GM12878 (cell line): ENCODE measurements at regions of chr18 and their contacts with region 1.

Region 1: DNA sequence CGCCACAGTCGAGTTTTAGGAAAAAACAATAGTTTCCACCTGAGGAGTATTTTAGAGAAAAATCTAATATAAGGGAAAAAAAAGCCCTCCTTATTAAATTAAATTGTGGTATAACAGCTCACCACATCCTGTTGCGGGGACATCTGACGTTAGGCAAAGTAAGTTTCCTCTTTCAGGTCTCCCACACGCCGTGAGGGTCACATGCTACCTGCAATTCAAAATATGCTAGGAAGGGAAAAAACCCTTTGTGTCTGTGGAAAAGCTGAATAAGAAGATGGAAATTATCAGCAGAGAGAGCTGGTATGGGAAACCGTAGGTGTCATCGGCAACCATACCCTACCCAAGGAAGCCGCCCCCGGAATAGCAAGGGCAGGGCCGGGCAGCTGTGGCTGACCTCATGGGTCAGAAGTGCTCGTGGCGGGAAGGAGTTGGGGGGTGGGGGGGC is 128.0 kb downstream of the NFATC1 start:
- DNase-seq: peak; percentile 49
- ATAC-seq: peak; percentile 82
- H3K4me3 ChIP-seq: no peak overlapping the region
- H3K27ac ChIP-seq: peak overlapping the region; percentile 69
- H3K4me1 ChIP-seq: peaks cover 26% of the 10 kb centered on the region
- H3K27me3 ChIP-seq: no peaks in the 10 kb centered on the region
- CTCF ChIP-seq: no peak
- EP300 ChIP-seq: peak; percentile 72 to 95
- POLR2A ChIP-seq: no peak
- RAD21 ChIP-seq: no peak

Region 2: DNA sequence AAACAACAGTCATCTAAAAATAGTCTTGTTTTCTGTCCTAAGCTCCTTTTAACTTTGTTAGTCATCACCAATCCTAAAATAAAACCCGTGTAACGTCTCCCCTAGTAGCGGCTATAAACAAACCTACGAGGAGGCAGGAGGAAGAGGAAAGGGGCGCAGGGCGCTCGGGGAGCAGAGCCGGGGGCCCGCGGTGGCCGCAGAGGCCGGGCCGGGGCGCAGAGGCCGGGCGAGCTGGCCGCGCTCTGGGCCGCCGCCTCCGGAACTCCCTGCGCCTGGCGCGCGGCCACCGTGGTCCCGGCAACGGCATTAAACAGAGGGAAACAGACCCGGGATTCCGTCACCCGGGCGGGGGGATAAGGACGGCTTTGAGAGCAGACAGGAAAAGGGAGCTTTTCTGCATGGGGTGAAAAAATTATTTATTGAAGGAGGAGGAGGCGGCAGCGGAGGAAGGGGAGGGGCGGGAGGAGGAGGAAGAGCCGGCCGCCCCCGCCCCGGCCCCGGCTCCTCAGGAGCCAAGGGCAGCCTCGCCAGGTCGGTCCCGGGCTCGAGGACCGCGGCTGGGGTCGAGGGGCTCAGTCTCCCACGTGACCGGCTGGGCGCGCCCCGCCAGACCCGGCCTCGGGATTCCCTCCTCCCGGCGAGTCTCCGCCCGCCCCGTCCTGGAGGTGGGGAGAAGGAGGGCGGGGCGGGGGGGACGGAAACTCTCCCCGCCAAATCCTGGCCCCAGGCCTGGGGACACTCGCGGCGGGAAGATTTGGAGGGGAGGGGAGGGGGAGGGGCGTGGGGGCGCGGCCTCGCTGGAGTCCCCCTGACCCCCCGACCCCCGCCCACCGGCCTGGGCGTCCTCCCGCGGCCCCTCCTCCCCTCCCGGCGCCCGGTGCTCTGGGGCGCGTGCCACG is 129.9 kb before region 1 on chr18:
- CTCF ChIA-PET with region 1: interaction called, 31 read pairs
- POLR2A ChIA-PET with region 1: interaction called, 16 read pairs
- RAD21 ChIA-PET with region 1: interaction called, 38 read pairs
- SMC1A ChIA-PET with region 1: interaction called, 22 read pairs
- in situ Hi-C with region 1: no loop called
- intact Hi-C with region 1: loop called (anchors 5 kb)
- DNase-seq: no peak
- ATAC-seq: peak; percentile 35
- H3K4me3 ChIP-seq: peak overlapping the region; percentile 68
- H3K27ac ChIP-seq: no peak overlapping the region
- H3K4me1 ChIP-seq: peaks cover 12% of the 10 kb centered on the region
- H3K27me3 ChIP-seq: peaks cover 2 to 21% of the 10 kb centered on the region in 2 experiments; a peak in 3 of 4 replicates
- CTCF ChIP-seq: no peak
- EP300 ChIP-seq: no peak
- POLR2A ChIP-seq: no peak
- RAD21 ChIP-seq: no peak

Region 3: GRCh38 chr18:79405781-79406575 is 117.8 kb before region 1 on chr18:
- CTCF ChIA-PET with region 1: interaction called, 6 read pairs
- POLR2A ChIA-PET with region 1: interaction called, 7 read pairs
- RAD21 ChIA-PET with region 1: interaction called, 36 read pairs
- SMC1A ChIA-PET with region 1: interaction called, 18 read pairs
- in situ Hi-C with region 1: loop called (anchors 10 kb)
- intact Hi-C with region 1: no loop called
- DNase-seq: peak; percentile 45
- ATAC-seq: peak; percentile 83
- H3K4me3 ChIP-seq: peak overlapping the region; percentile 52; the same call in 1 of the 2 replicates
- H3K27ac ChIP-seq: peak overlapping the region; percentile 56
- H3K4me1 ChIP-seq: peaks cover 31% of the 10 kb centered on the region
- H3K27me3 ChIP-seq: no peaks in the 10 kb centered on the region
- CTCF ChIP-seq: 0 out of 6 replicates have a peak, but pooled peaks of 1 of the 3 experiments have one; percentile 6
- EP300 ChIP-seq: peak in 1 of 2 experiments; percentile 27; a peak in 2 of 4 replicates
- POLR2A ChIP-seq: peak; percentile 74
- RAD21 ChIP-seq: no peak

Region 4: DNA sequence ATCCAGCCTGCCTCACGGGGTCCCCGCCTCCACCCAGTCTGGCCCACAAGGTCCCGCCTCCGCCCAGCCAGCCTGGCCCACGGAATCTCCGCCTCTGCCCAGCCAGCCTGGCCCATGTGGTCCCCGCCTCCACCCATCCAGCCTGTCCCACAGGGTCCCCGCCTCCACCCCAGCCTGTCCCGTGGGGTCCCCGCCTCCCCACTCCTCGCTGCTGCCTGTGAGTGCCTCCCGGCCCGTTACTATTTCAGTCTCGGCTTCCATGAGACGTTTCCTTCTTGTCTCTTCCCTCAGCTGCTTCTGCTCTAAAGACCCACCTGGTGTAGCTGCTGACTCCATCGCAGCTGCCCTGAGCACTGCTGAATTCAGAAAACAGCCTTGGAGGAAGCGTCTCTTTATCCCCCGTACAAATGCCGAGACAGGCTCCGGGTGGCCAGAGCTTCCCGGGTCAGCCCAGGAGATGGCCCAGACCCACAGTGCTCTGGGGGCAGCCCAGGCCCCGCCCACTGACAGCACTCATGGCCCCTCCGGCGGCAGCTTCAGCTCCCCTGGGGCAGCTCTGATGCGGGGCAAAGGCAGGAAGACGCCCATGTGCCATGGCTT is 58.3 kb before region 1 on chr18:
- CTCF ChIA-PET with region 1: interaction called, 7 read pairs
- POLR2A ChIA-PET with region 1: interaction called, 12 read pairs
- RAD21 ChIA-PET with region 1: interaction called, 22 read pairs
- SMC1A ChIA-PET with region 1: interaction called, 11 read pairs
- in situ Hi-C with region 1: no loop called
- intact Hi-C with region 1: loop called (anchors 1 kb)
- DNase-seq: peak; percentile 5
- ATAC-seq: peak; percentile 90
- H3K4me3 ChIP-seq: peak overlapping the region; percentile 48; the same call in 1 of the 2 replicates
- H3K27ac ChIP-seq: peak overlapping the region; percentile 54
- H3K4me1 ChIP-seq: peaks cover 32% of the 10 kb centered on the region
- H3K27me3 ChIP-seq: no peaks in the 10 kb centered on the region
- CTCF ChIP-seq: no peak
- EP300 ChIP-seq: no peak
- POLR2A ChIP-seq: peak; percentile 40; the same call in 1 of the 2 replicates
- RAD21 ChIP-seq: no peak

Region 5: GRCh38 chr18:79625195-79625923 is 101.6 kb after region 1 on chr18:
- CTCF ChIA-PET with region 1: interaction called, 4 read pairs
- POLR2A ChIA-PET with region 1: interaction called, 4 read pairs
- RAD21 ChIA-PET with region 1: interaction called, 20 read pairs
- SMC1A ChIA-PET with region 1: interaction called, 9 read pairs
- in situ Hi-C with region 1: no loop called
- intact Hi-C with region 1: no loop called
- DNase-seq: peak; percentile 79
- ATAC-seq: peak; percentile 89
- H3K4me3 ChIP-seq: peak overlapping the region; percentile 23; the same call in 1 of the 2 replicates
- H3K27ac ChIP-seq: peak overlapping the region; percentile 89
- H3K4me1 ChIP-seq: peaks cover 32% of the 10 kb centered on the region
- H3K27me3 ChIP-seq: no peaks in the 10 kb centered on the region
- CTCF ChIP-seq: no peak
- EP300 ChIP-seq: peak in 1 of 2 experiments; percentile 39; a peak in 1 of 4 replicates
- POLR2A ChIP-seq: 0 out of 2 replicates have a peak, but pooled peaks have one; percentile 33
- RAD21 ChIP-seq: no peak

Region 6: DNA sequence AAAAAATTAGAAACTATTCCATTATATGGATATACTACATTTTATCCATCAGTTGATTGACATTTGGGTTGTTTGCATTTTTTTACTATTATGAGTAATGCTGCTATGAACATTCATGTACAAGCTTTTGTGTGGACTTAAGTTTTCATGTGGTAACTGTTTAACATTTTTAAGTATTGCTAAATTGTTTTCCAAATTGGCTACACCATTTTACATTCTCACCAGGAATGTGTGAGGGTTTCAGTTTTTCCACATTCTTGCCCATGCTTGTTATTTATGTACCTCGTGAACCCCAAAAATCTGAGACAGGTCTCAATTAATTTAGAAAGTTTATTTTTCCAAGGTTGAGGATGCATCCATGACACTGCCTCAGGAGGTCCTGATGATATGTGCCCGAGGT is 467.7 kb after region 1 on chr18:
- CTCF ChIA-PET with region 1: no interaction called
- POLR2A ChIA-PET with region 1: no interaction called
- RAD21 ChIA-PET with region 1: no interaction called
- SMC1A ChIA-PET with region 1: no interaction called
- in situ Hi-C with region 1: no loop called
- intact Hi-C with region 1: no loop called
- DNase-seq: no peak
- ATAC-seq: no peak
- H3K4me3 ChIP-seq: no peak overlapping the region
- H3K27ac ChIP-seq: no peak overlapping the region
- H3K4me1 ChIP-seq: no peaks in the 10 kb centered on the region
- H3K27me3 ChIP-seq: no peaks in the 10 kb centered on the region
- CTCF ChIP-seq: no peak
- EP300 ChIP-seq: no peak
- POLR2A ChIP-seq: no peak
- RAD21 ChIP-seq: no peak